ENCODE measurements at regions of chr17 and their contacts with region 1.

Region 1: DNA sequence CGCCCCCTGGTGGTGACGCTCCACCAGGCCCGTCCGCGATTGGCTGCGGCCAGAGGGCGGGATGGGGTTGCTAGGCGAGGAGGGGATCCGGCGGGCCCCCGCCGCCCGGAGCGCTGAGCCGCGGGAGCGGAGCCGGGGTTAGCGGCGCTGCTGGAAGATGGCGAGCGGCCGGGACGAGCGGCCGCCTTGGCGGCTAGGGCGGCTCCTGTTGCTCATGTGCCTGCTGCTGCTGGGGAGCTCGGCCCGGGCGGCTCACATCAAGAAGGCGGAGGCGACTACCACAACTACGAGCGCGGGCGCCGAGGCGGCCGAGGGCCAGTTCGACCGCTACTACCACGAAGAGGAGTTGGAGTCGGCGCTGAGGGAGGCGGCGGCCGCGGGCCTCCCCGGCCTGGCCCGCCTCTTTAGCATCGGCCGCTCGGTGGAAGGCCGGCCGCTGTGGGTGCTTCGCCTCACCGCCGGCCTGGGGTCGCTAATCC is at the start of gene CPD:
- DNase-seq: peak; percentile 98
- H3K4me3 Mint-ChIP-seq: peak within 1 kb of the TSS; percentile 86
- H3K27ac Mint-ChIP-seq: peak within 1 kb of the TSS; percentile 92
- H3K4me1 Mint-ChIP-seq: peaks cover 64% of the 10 kb centered on the region
- H3K27me3 Mint-ChIP-seq: no peaks in the 10 kb centered on the region
- total RNA-seq, gene CPD: 37.9 to 43.8 TPM

Region 2: GRCh38 chr17:29771551-29771950 is 607.3 kb before region 1 on chr17:
- CTCF ChIA-PET with region 1: no interaction called
- intact Hi-C with region 1: no loop called
- DNase-seq: no peak
- H3K4me3 Mint-ChIP-seq: no peak overlapping the region
- H3K27ac Mint-ChIP-seq: no peak overlapping the region
- H3K4me1 Mint-ChIP-seq: no peaks in the 10 kb centered on the region
- H3K27me3 Mint-ChIP-seq: no peaks in the 10 kb centered on the region

Region 3: GRCh38 chr17:30413109-30413508 is 34.2 kb after region 1 on chr17:
- CTCF ChIA-PET with region 1: no interaction called
- intact Hi-C with region 1: loop called (anchors 2 kb)
- DNase-seq: no peak
- H3K4me3 Mint-ChIP-seq: no peak overlapping the region
- H3K27ac Mint-ChIP-seq: peak overlapping the region; percentile 63
- H3K4me1 Mint-ChIP-seq: peaks cover 32% of the 10 kb centered on the region
- H3K27me3 Mint-ChIP-seq: no peaks in the 10 kb centered on the region

Region 4: DNA sequence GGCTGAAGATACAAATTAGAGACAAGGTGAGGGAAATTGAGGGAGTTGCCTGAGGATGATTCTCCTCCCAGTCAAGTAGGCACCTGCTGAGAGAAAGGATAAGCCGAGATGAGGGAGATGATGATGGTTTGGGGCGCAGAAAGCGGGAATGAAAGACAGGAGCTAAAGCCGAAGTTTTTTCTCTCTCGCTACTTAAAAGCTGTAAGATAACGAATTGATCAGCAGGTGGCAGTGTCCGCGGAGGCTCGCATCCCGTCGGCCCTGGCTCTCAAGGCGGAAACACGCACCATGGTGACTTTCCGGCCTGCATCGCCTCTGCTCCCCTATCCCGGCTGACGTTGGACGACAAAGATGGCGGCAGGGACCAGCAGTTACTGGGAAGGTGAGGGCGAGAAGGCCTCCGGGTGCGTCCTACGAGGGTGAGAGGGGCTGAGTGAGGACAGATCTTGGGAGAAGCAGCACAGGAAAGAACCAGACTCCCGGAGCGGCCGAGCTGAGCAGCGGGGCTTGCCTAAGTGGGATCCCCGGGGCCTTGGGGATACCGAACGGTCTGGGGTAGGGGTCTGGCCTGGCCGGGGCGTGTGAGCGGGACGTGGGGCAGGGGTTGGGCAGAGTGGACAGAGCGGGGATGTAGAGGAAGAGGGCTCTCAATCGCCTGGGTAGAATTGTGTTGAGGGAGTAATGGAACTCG is 98.4 kb after region 1 on chr17 and contains the start of gene GOSR1:
- CTCF ChIA-PET with region 1: interaction called, 3 read pairs
- intact Hi-C with region 1: loop called (anchors 1 kb)
- DNase-seq: peak; percentile 97
- H3K4me3 Mint-ChIP-seq: peak within 1 kb of the TSS; percentile 98
- H3K27ac Mint-ChIP-seq: peak within 1 kb of the TSS; percentile 97
- H3K4me1 Mint-ChIP-seq: peaks cover 36% of the 10 kb centered on the region
- H3K27me3 Mint-ChIP-seq: peaks cover 2% of the 10 kb centered on the region
- total RNA-seq, gene GOSR1: 33.9 to 37.3 TPM

Region 5: GRCh38 chr17:30716461-30717300 is 337.8 kb after region 1 on chr17:
- CTCF ChIA-PET with region 1: interaction called, 3 read pairs
- intact Hi-C with region 1: loop called (anchors 10 kb)
- DNase-seq: peak; percentile 36
- H3K4me3 Mint-ChIP-seq: no peak overlapping the region
- H3K27ac Mint-ChIP-seq: no peak overlapping the region
- H3K4me1 Mint-ChIP-seq: peaks cover 11% of the 10 kb centered on the region
- H3K27me3 Mint-ChIP-seq: no peaks in the 10 kb centered on the region

Region 6: DNA sequence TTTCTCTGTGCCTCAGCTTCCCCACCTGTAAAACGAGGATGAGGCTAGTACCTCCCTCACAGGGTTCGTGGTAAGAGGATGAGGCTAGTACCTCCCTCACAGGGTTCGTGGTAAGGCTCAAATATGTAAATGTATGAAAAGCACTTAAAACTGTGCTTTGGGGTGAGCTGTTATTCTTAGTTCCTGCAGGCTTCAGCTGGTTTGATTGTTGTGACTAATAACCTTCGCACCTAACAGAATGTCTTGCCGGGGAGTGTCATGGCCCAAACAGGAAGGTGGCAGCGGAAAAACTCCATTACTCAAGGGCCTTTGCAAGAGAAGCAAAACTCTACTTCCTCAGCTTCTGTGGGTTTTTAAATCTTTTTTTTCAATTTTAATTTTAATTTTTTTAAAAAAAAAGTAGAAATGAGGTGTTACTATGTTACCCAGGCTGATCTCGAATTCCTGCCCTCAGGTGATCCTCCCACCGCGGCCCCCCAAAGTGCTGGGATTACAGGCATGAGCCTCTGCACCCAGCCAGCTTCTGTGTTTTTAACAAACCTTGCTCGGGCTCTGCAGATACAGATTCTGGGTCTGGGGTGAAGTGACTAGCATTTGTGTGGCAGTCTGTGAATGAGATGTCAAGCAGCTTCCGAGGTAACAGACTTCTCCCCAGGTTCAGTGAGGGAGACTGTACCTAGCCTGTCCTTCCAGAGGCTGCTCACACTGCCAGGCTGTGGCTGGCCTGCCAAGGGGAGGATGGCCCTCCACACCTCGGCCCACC is 1115.6 kb after region 1 on chr17:
- CTCF ChIA-PET with region 1: no interaction called
- intact Hi-C with region 1: loop called (anchors 5 kb)
- DNase-seq: peak; percentile 86
- H3K4me3 Mint-ChIP-seq: peak overlapping the region; percentile 64
- H3K27ac Mint-ChIP-seq: peak overlapping the region; percentile 96
- H3K4me1 Mint-ChIP-seq: peaks cover 89% of the 10 kb centered on the region
- H3K27me3 Mint-ChIP-seq: no peaks in the 10 kb centered on the region

Measured in activated naive CD4-positive, alpha-beta T cell treated with anti-CD3 and anti-CD28 coated beads for 36 hours (primary cell).